B cell (primary cell): ENCODE measurements at regions of chr2 and their contacts with region 1.

Region 1: DNA sequence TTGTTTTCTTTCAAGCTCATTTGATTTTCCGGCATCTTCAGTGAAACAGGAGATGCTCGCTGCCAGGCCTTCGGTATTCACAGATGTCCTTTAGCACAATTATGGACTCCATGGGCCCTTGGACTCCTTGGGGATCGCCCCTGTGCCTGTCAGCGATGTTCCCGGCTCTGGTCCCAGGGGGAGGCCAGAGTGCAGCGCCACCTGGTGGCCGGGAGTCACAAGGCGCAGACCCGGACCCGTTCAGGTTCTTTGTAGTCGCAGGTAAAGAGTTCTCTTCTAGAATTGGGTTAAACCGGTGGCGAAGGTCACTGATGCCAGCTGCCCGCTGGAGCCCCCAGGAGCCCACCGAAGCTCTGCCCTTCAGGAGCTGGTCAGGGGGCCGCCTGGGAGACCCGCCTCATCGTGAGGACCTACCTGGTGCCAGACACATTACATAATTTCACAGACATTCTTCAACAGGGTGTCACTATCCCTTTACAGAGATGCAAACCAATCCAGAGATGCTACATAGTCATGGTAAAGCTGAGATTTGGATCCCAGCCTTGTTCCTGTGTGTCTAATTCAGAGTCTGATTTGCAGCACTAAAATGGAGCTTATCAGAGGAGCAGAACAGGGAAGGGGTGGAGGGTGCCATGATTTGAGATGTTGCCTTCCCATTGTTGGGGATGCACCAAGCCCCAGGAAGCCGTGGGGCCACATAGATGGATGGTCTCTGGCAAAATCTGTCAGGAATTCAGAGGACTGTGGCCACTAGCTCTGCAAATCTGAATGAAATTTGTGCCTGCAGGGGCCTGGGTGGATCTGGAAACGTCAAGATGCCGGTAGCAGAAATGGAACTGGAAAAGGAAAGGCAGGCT is 6.0 kb upstream of the INPP5D start:
- DNase-seq: peak; percentile 76
- ATAC-seq: peak; percentile 81
- H3K4me3 ChIP-seq: no peak overlapping the region
- H3K4me3 Mint-ChIP-seq: peak overlapping the region; percentile 6
- H3K27ac ChIP-seq: no peak overlapping the region
- H3K27ac Mint-ChIP-seq: peak overlapping the region; percentile 56
- H3K4me1 ChIP-seq: peaks cover 9 to 14% of the 10 kb centered on the region in 2 donors
- H3K4me1 Mint-ChIP-seq: peaks cover 18% of the 10 kb centered on the region
- H3K27me3 ChIP-seq: no peaks in the 10 kb centered on the region
- H3K27me3 Mint-ChIP-seq: no peaks in the 10 kb centered on the region
- CTCF ChIP-seq: peak; percentile 95

Region 2: DNA sequence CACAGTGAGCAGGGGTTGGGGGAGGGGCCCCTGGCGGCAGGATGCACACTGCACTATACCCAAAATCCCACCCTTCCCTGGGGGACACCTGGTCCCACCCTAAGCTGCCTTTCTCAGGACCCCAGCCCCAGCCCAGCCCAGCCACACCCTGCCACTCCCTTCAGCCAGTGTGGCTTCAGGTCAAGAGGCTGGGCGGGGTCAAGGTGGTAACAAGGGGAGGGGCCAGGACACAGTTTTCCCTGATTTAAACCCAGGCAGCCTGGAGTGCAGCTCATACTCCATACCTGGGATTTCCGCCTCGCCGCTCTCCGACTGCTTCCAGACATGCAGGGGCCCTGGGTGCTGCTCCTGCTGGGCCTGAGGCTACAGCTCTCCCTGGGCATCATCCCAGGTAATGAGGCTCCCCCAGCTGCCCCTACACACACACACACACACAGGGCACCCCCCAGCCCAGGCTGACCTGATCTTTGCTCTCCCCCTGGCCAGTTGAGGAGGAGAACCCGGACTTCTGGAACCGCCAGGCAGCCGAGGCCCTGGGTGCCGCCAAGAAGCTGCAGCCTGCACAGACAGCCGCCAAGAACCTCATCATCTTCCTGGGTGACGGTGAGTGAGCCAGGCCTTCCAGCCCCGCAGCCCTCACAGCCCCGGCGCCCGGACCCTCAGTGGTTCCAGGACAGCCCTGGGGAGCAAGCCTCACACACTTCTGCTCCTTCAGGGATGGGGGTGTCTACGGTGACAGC is 647.4 kb before region 1 on chr2 and contains the start of gene ALPG:
- CTCF ChIA-PET with region 1: no interaction called
- POLR2A ChIA-PET with region 1: no interaction called
- intact Hi-C with region 1: no loop called
- DNase-seq: no peak
- ATAC-seq: no peak
- H3K4me3 ChIP-seq: no peak within 1 kb of the TSS
- H3K4me3 Mint-ChIP-seq: no peak within 1 kb of the TSS
- H3K27ac ChIP-seq: no peak within 1 kb of the TSS
- H3K27ac Mint-ChIP-seq: no peak within 1 kb of the TSS
- H3K4me1 ChIP-seq: no peaks in the 10 kb centered on the region
- H3K4me1 Mint-ChIP-seq: no peaks in the 10 kb centered on the region
- H3K27me3 ChIP-seq: no peaks in the 10 kb centered on the region
- H3K27me3 Mint-ChIP-seq: peaks cover 7% of the 10 kb centered on the region
- CTCF ChIP-seq: no peak
- total RNA-seq, gene ALPG: not detected in 2 replicates

Region 3: GRCh38 chr2:233026192-233026813 is 27.9 kb before region 1 on chr2:
- CTCF ChIA-PET with region 1: interaction called, 32 read pairs
- POLR2A ChIA-PET with region 1: no interaction called
- intact Hi-C with region 1: no loop called
- DNase-seq: no peak
- ATAC-seq: no peak
- H3K4me3 ChIP-seq: no peak overlapping the region
- H3K4me3 Mint-ChIP-seq: no peak overlapping the region
- H3K27ac ChIP-seq: no peak overlapping the region
- H3K27ac Mint-ChIP-seq: no peak overlapping the region
- H3K4me1 ChIP-seq: no peaks in the 10 kb centered on the region
- H3K4me1 Mint-ChIP-seq: no peaks in the 10 kb centered on the region
- H3K27me3 ChIP-seq: no peaks in the 10 kb centered on the region
- H3K27me3 Mint-ChIP-seq: no peaks in the 10 kb centered on the region
- CTCF ChIP-seq: no peak

Region 4: DNA sequence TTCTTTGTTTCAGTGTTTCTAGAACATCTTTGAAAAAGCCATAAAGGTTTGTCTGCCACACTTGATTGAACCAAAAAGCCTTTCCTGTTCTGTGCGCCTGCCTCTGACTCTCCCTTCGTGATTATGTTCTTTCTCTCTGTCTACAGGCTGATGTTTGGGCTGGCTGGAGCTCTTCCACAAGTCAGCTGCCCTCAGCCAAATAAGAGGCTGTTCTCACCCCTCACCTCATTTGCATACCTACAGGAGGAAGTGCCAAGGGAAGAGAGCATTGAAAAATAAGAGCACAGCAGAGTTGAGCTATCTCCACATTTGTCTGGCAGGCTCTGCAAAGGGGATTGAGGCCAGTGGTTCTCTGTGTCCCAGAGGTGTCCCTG is 21.8 kb after region 1 on chr2:
- CTCF ChIA-PET with region 1: interaction called, 70 read pairs
- POLR2A ChIA-PET with region 1: interaction called, 112 read pairs
- intact Hi-C with region 1: no loop called
- DNase-seq: peak; percentile 86
- ATAC-seq: peak; percentile 83
- H3K4me3 ChIP-seq: peak overlapping the region; percentile 8 to 53 (median 35)
- H3K4me3 Mint-ChIP-seq: no peak overlapping the region
- H3K27ac ChIP-seq: peak overlapping the region; percentile 77 to 87
- H3K27ac Mint-ChIP-seq: no peak overlapping the region
- H3K4me1 ChIP-seq: peaks cover 91% of the 10 kb centered on the region in 2 donors
- H3K4me1 Mint-ChIP-seq: peaks cover 50% of the 10 kb centered on the region
- H3K27me3 ChIP-seq: no peaks in the 10 kb centered on the region
- H3K27me3 Mint-ChIP-seq: no peaks in the 10 kb centered on the region
- CTCF ChIP-seq: no peak

Region 5: GRCh38 chr2:233108611-233109490 is 54.7 kb after region 1 on chr2:
- CTCF ChIA-PET with region 1: interaction called, 21 read pairs
- POLR2A ChIA-PET with region 1: interaction called, 10 read pairs
- intact Hi-C with region 1: no loop called
- DNase-seq: peak; percentile 42
- ATAC-seq: peak; percentile 63
- H3K4me3 ChIP-seq: no peak overlapping the region
- H3K4me3 Mint-ChIP-seq: peak overlapping the region; percentile 82
- H3K27ac ChIP-seq: peak overlapping the region in 1 of 2 donors; percentile 73
- H3K27ac Mint-ChIP-seq: peak overlapping the region; percentile 89
- H3K4me1 ChIP-seq: peaks cover 68 to 78% of the 10 kb centered on the region in 2 donors
- H3K4me1 Mint-ChIP-seq: peaks cover 80% of the 10 kb centered on the region
- H3K27me3 ChIP-seq: no peaks in the 10 kb centered on the region
- H3K27me3 Mint-ChIP-seq: no peaks in the 10 kb centered on the region
- CTCF ChIP-seq: no peak

Region 6: GRCh38 chr2:233142355-233142897 is 88.3 kb after region 1 on chr2:
- CTCF ChIA-PET with region 1: interaction called, 13 read pairs
- POLR2A ChIA-PET with region 1: no interaction called
- intact Hi-C with region 1: no loop called
- DNase-seq: peak; percentile 72
- ATAC-seq: peak; percentile 82
- H3K4me3 ChIP-seq: no peak overlapping the region
- H3K4me3 Mint-ChIP-seq: peak overlapping the region; percentile 54
- H3K27ac ChIP-seq: peak overlapping the region; percentile 38 to 54
- H3K27ac Mint-ChIP-seq: peak overlapping the region; percentile 91
- H3K4me1 ChIP-seq: peaks cover 13 to 19% of the 10 kb centered on the region in 2 donors
- H3K4me1 Mint-ChIP-seq: peaks cover 34% of the 10 kb centered on the region
- H3K27me3 ChIP-seq: no peaks in the 10 kb centered on the region
- H3K27me3 Mint-ChIP-seq: no peaks in the 10 kb centered on the region
- CTCF ChIP-seq: no peak